ENCODE measurements at regions of chr17 and their contacts with region 1.

Region 1: DNA sequence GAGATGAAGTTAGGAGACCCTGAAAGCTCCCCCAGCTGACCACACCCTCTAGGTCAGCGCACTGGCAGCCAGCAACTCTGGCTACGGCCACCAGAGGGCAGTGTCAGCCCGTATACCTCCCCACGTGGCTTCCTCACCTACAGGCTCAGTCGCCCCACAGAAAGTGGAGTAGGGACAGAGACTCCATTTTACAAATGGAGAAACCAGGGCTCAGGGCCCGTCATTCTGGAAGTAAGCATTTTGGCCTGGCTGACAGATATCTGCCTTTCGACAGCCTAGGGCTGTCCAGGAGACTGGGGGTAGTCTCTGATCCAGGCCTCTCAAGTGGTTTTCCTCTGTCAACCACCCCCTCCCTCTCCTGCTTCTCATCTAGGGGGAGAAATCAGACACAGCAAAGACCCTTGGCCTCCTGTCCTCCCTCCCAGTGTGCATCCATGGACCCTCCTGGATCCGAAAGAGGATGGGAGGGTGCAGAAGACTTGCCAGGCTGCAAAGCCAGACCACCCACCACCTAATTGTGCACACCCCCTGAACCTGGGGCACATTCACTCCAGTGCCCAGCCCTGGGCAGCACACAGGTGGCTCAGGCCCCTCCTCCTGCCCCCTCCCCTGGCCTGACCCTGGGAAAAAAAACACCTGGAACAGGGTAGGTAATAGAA is 3.8 kb upstream of the HAP1 start:
- H3K4me3 Mint-ChIP-seq: no peak overlapping the region
- H3K27ac Mint-ChIP-seq: no peak overlapping the region
- H3K4me1 Mint-ChIP-seq: peaks cover 18% of the 10 kb centered on the region
- H3K27me3 Mint-ChIP-seq: peaks cover 57% of the 10 kb centered on the region

Region 2: DNA sequence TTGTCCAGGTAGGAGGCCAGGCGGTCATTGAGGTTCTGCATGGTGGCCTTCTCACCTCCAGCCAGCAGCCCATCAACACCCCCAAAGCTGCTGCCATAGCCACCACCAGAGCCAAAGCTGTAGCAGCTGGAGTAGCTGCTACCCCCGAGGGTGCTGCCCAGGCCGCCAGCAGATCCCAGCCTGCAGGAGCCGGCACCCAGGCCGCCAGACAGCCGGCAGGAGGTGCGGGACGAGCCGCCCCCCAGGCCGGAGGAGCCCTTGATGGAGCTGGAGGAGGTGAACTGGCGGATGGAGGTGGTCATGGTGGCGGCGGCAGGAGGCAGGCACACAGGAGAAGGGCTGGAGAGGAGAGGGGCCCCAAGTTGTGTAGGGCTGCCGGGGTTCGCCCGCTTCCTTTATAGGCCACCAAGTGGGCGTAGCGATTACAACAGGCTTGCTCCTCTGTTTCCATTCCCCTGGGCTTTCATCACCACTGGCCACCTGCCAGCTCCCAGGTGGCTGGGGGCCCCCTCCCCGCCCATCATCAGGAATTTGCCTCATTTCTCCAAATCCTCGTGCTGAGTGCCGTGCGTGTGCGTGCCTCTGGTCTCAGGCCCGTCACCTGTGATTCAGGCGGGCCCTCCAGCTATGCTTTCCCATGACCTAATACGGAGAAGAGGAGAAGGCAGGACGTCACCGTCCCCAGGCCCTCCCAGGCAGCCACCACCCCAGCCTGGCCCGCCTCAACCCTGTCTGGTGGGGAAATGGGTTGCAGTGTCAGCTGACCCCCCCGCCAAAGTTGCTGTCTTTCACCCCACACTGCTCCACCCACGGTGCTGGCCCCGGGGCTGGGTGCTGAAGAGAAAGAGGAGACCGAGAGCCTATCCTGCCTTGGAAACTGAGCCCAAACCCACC is 113.8 kb before region 1 on chr17 and contains the start of gene KRT17:
- intact Hi-C with region 1: no loop called
- H3K4me3 Mint-ChIP-seq: no peak within 1 kb of the TSS
- H3K27ac Mint-ChIP-seq: peak within 1 kb of the TSS; percentile 60
- H3K4me1 Mint-ChIP-seq: peaks cover 55% of the 10 kb centered on the region
- H3K27me3 Mint-ChIP-seq: peaks cover 47% of the 10 kb centered on the region

Region 3: DNA sequence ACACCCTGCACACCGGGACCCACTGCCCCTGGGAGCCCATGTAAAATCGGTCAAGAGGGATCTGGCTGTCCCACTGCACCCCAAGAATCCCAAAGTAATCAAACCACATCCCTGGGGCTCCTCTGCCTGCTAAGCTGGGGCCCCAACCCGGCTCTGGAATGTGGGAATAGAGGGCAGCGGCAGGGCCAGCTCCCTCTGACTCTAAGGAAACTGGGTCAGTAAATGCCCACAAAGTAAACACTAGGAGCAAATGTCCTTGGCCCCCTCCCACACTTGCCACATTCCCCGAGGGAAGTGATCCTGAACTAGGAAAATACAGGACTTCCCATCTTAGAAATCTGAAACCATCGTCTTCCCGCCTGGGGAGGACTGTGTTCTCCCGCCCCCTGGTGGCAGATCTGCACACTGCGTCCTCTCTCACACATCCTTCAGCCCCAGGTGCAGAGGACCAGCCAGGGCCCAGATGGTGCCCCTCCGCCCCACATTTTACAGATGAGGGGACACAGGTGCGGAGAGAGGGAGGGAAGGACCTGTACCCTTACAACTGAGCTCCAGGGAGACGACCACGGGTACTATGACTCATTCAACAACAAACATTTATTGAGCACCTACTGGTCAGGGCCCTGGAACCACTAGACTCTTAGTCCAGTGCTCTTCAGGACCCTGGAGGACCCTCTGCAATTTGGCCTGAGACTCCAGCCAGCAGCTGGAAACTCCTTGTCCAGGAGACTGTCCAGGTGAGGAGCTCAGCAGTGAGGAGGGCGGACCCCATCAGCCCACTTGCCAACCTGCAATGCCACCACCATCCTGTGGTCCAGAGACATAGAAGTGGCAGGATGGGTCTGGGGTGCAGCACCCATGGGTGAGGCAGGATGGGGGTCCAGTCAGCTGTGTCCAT is 63.4 kb after region 1 on chr17:
- intact Hi-C with region 1: loop called (anchors 1 kb)
- H3K4me3 Mint-ChIP-seq: no peak overlapping the region
- H3K27ac Mint-ChIP-seq: no peak overlapping the region
- H3K4me1 Mint-ChIP-seq: peaks cover 32% of the 10 kb centered on the region
- H3K27me3 Mint-ChIP-seq: peaks cover 17% of the 10 kb centered on the region

Region 4: GRCh38 chr17:41864836-41865595 is 126.8 kb after region 1 on chr17 and contains the start of gene KLHL11:
- intact Hi-C with region 1: loop called (anchors 10 kb)
- H3K4me3 Mint-ChIP-seq: no peak within 1 kb of the TSS
- H3K27ac Mint-ChIP-seq: no peak within 1 kb of the TSS
- H3K4me1 Mint-ChIP-seq: peaks cover 17% of the 10 kb centered on the region
- H3K27me3 Mint-ChIP-seq: no peaks in the 10 kb centered on the region